Body of pancreas (tissue), 4 donors: ENCODE measurements at regions of chr17 and their contacts with region 1.

Region 1: DNA sequence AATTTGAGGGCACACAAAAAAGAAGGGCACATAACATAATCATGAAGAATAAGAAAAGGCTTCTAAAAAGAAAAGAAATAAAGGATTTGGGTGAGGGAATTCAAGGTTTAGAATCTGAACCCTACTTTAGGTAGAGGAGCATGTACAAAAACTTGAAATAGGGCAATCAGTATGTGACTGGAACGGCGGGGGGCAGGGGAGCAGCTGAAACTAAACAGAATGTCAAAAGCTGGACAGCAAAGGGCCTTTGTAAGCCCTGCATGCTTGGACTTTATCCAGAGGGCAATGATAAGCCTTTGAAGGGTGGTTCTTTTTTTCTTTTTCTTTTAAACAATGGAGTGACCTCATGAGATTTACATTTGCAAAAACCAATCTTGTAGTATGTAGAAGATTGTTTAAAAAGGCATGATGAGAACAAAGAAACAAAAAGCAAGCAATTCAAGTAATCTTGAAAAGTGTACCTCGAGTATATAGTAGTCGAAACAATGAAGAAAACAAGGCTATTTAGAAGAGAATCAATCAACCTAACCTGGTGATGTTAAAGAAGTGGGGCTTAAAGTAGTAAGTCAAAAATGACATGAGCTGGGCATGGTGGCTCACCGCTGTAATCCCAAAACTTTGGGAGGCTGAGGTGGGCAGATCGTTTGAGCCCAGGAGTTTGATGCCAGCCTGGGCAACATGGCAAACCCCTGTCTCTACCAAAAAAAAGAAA is 46.7 kb upstream of the ANKFY1 start:
- DNase-seq: peak; percentile 22 to 59 (median 40)
- ATAC-seq: peak; percentile 71
- H3K4me3 ChIP-seq: no peak overlapping the region
- H3K27ac ChIP-seq: peak overlapping the region in 3 of 4 donors; percentile 6 to 29 (median 17)
- H3K4me1 ChIP-seq: peaks cover 53% of the 10 kb centered on the region
- H3K27me3 ChIP-seq: no peaks in the 10 kb centered on the region
- CTCF ChIP-seq: no peak
- POLR2A ChIP-seq: no peak

Region 2: GRCh38 chr17:4175921-4176807 is 134.3 kb before region 1 on chr17:
- intact Hi-C with region 1: no loop called
- DNase-seq: no peak
- ATAC-seq: no peak
- H3K4me3 ChIP-seq: no peak overlapping the region
- H3K27ac ChIP-seq: no peak overlapping the region
- H3K4me1 ChIP-seq: no peaks in the 10 kb centered on the region
- H3K27me3 ChIP-seq: no peaks in the 10 kb centered on the region
- CTCF ChIP-seq: no peak
- POLR2A ChIP-seq: no peak

Region 3: GRCh38 chr17:4407851-4408250 is 97.3 kb after region 1 on chr17:
- intact Hi-C with region 1: loop called (anchors 10 kb)
- DNase-seq: peak; percentile 60 to 76 (median 70)
- ATAC-seq: peak; percentile 87
- H3K4me3 ChIP-seq: no peak overlapping the region
- H3K27ac ChIP-seq: peak overlapping the region in 2 of 4 donors; percentile 19 to 52
- H3K4me1 ChIP-seq: peaks cover 10% of the 10 kb centered on the region
- H3K27me3 ChIP-seq: no peaks in the 10 kb centered on the region
- CTCF ChIP-seq: peak in 1 of 7 experiments; percentile 30
- POLR2A ChIP-seq: no peak